GM10248 (cell line): ENCODE measurements at regions of chr5 and their contacts with region 1.

Region 1: DNA sequence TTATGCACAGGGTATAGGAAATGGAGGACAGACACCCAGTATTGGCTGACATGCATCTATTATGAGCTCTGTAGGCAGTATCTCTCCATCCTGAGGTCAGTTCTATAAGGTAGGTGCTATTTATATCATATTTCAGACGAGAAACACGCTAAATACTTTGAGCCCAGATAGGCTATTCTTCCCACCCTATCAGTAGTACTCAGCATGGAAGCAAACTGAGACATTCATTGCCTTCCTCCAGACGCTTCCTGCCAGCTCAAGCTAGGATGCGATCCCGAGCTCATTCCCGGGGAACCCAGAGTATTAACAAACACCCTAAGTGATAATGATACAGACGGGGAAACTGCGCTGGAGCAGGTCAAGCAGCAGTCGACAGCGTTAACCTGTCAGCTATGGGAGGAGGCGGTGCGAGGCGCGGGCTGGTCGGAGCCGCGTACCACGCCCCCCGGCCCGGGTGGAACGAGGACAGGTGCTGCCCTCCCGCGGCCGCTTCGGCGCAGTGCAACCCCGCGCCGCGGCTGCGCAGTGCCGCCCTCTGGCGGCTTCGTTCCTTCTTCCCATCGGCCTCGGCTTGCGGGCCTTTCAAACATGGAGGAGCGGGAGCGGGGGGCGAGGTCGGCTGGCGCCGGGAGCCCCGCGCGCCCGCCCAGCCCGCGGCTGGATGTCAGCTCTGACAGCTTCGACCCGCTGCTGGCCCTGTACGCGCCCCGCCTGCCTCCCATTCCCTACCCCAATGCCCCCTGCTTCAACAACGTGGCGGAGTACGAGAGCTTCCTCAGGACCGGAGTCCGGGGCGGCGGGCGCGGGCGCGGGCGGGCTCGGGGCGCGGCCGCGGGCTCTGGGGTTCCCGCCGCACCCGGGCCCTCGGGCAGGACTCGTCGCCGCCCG is at the start of gene LSM11:
- DNase-seq: peak; percentile 94
- CTCF ChIP-seq: peak; percentile 100

Region 2: DNA sequence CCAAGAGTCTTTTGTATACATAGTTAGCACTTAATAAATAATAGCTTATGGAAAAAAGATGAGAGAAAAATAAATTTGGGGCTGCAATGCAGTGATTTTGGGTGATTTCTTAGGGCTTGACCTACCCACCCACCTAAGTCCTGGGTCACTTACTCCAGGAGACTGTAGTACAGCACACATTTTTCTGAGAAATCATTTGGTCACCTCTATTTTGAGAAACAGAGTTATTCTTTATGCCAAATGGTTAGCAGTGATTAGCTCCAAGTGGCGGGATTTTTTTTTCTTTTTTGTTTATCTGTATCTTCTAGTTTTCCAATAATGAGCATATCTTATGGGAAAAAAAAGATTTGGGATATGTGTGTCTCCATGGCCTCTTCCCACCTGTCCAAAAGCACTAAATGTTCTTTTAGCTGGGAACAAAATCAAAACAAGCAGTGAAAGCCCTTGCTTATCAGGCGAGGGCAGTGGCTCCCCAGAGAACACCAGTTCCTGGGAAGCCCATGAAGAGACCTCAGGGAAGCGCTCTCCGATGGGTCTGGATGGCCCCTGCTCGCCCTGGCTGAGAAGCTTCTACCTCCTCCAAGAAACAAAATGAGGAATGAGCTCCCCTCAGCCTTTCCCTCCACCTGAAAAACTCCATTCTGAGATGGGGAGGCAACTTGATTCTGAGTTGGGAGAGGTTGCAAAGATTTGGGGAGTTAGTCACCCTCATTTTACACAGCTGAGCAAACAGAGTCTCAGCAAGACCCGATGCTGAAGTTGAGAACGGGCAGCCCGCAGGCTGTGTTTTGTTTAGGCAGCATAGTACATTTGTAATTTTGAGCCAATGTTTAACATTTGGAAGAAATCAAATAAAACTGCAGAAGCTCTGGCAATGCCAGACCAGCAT is 407.6 kb before region 1 on chr5:
- CTCF ChIA-PET with region 1: interaction called, 13 read pairs
- POLR2A ChIA-PET with region 1: interaction called, 3 read pairs
- DNase-seq: no peak
- CTCF ChIP-seq: no peak

Region 3: GRCh38 chr5:157390551-157391297 is 352.7 kb before region 1 on chr5:
- CTCF ChIA-PET with region 1: interaction called, 12 read pairs
- POLR2A ChIA-PET with region 1: no interaction called
- DNase-seq: no peak
- CTCF ChIP-seq: no peak

Region 4: DNA sequence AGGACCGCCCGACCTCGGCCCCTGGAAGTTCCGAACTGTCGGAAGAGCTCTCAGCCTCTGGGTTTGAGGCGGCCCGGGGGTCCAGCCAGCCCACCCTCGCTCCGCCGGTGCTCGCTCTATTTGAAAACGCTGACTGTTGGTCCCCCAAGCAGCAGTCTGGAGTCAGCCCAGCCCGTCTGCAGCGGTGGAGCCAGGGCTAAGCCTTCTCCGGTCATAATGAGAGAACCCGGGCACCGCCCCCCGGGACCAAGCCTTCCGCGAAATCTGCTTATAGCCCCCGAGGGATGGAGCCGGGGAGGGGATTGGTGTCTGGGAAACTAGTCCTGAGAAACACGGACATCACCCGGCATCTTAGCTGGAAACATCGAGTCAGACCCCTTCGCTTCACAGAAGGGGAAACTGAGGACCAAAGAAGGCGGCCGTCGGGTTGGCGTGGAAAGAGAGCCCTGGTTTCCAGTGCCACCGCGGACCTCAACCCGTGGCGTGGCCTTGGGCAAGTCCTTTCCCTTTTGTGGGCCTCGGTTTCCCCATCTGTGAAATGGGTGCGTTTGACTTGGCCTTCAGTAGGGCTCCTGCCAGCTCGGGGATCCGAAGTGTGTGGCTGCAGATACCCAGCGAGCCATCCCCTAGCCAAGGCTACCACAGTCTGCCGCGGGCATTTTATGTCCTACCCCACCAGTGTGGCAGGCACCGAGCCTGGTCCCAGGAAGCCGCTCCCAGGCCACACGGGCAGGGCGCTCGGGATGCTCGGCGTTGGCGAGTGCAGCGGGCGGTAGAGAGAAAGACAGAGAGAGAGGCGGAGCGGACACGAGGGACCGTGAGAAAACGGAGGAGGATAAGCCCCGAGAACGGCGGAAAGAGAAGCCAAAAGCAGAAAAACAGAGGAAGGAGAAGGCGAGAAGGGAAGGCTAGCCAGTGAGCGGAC is 168.7 kb before region 1 on chr5:
- CTCF ChIA-PET with region 1: interaction called, 11 read pairs
- POLR2A ChIA-PET with region 1: no interaction called
- DNase-seq: peak; percentile 45
- CTCF ChIP-seq: no peak

Region 5: DNA sequence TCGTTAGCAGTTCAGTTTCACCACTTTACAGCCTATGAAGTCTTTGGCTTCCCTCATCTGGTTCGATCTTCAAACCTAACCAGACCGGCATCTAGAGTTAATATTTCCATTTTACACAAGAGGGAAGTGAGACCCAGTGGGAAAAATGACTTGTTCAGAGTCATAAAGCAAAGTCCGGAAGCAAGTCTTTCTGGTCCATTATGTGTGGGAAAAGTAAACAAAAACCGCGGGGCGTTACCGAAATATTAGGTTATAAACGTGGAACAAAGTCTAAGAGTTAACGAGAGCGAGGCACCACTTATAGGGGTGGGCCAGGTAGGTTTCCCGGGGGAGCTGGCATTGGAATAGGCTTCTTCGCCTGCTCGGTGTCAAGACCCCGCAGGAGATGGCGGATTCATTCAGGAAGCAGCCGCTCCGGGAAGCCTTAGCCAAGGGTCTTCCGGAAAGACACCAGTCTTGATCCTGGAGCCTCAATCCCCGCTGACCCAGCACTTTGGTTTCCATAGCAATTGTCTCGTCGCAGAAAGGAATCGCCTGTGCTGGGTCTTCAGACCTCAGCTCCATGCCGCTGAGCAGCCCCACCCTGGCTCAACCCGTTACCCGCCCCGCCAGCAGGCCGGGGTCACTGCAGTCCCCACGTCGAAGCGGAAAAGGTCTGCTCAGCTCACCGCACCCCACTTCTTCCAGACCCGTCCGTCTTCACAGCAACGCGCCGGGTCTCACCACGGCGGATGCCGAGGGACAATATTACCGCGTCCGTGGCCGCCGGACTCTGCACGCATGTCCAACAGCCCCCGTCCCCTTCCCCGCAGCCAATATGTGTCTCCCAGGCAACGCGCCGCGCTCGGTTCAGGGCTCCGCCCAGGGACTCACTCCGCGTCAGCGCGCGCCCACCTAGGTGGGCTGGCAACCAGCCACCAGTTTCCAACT is 72.5 kb before region 1 on chr5 and contains the start of gene C5orf52:
- CTCF ChIA-PET with region 1: interaction called, 128 read pairs
- POLR2A ChIA-PET with region 1: no interaction called
- DNase-seq: peak; percentile 57
- CTCF ChIP-seq: no peak

Region 6: DNA sequence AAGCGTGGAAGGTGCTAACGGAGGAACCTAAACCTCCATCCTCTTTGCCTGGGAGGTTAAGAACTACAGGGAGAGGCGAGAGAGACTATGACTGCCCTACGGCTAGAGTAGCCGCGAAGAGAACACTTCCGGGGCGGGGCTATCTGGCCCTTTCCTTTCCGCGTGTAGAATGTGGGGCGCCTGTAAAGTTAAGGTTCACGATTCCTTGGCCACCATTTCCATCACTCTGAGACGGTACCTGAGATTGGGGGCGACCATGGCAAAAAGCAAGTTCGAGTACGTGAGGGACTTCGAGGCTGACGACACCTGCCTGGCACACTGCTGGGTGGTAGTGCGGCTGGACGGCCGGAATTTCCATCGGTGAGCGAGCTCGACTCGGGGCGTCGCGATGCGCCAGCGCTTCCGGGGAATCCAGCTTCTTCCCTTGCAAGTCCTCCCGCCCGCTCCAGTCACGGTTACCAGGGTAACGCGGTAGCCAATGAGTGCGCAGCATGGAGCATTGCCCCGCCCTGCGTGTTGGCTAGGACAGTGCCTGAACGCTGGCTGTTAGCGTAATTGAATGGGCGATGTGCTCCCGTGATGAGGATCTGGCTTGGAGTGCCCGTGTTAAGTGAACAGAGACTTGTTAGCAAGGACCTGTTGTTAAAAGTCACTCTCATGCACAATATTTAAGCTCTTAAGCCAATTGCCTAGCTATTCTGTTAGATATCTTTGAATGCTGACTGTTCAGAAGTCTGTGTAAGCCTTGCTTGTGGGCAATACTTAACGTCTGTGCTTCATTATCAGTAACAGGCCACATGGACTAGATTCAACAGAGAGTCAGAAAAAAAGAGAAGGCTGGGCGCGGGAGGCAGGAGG is 11.9 kb before region 1 on chr5 and contains the start of gene THG1L:
- CTCF ChIA-PET with region 1: interaction called, 73 read pairs
- POLR2A ChIA-PET with region 1: no interaction called
- DNase-seq: peak; percentile 94
- CTCF ChIP-seq: no peak